CD4-positive, alpha-beta memory T cell (primary cell): ENCODE measurements at regions of chr12 and their contacts with region 1.

Region 1: DNA sequence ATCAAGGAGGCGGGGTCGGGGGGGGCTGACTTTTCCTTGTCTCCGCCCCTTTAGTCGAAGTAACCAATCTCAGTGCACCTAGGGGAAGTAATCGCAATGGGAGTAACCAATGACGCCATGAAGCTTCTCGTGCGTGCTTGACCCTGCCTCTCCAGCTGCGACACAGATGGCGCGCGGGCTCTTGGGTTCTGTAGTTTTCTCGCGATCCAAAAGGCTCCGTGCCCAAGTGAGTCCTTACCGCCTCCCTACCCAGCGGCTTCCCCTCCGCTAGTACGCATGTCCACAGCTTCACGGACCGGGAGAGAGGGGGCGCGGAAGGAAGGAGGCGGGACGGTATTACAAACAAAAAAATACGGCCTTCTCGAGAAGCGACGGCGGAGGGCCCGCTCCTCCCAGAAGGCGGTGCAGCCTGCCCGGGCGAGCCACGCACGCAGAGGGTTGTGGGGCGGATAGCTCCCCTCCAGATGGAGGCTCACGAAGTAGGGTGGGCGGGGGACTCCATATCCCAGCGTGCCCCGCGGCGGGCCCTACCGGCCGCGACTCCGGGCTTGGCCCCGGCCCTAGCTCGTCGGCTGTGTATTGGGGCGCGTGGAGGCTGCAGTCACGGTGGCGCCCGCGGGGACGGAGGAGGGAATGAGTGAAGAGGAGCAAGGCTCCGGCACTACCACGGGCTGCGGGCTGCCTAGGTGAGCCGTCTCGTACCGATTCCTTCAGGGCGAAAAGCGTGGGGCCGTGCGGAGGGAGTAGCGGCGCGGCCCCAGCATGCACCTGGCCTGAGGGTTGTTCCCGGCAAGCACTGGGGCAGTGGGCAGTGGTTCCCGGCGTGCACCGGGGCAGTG is at the start of gene TARBP2:
- DNase-seq: peak; percentile 98 to 99 (median 99)
- H3K4me3 ChIP-seq: peak within 1 kb of the TSS; percentile 79 to 91
- H3K4me3 Mint-ChIP-seq: peak within 1 kb of the TSS; percentile 89 to 98 (median 92)
- H3K27ac ChIP-seq: peak within 1 kb of the TSS; percentile 98
- H3K27ac Mint-ChIP-seq: peak within 1 kb of the TSS; percentile 92 to 100 (median 99)
- H3K4me1 ChIP-seq: peaks cover 41% of the 10 kb centered on the region
- H3K4me1 Mint-ChIP-seq: peaks cover 17 to 63% (median 45%) of the 10 kb centered on the region in 4 donors
- H3K27me3 ChIP-seq: no peaks in the 10 kb centered on the region
- H3K27me3 Mint-ChIP-seq: no peaks in the 10 kb centered on the region
- total RNA-seq, gene TARBP2: 26.9 to 37.0 TPM

Region 2: DNA sequence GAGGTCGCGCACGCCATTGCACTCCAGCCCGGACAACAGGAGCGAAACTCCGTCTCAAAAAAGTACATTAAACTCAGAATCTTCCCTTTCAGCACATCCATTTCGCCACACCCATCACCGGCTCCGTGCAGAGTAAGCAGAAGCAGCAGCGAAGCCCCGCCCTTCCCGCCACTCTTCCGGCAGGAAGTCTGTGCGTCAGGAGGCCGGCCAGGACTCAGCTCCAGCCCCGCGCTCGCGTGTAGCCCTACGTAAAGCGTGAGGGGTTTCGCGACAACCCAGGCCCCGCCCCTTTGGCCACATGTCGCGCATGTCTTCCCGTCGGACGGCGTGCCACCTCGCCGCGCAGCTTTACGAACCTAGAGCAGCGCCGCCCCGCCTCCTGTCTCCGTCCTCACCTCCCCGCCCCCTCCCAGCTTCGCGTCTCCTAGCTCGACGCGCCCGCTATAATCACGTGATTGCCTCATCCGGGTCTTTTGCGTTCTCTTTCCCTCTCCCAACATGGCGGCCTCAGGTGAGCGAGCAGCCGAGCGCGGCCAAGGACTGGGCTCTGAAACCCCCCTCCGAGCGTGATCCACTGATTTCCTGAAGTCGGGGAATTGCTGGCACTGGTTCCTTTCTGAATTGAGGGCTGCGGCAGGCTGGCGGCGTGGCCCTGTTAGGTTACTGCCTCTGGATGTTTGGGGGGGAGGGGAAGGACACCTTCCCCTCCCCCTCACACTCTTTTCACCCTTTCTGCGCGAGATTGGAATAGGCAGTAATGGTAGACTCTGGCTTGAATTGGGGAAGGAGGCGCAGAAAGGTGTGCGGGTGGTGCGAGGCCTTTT is 494.8 kb before region 1 on chr12 and contains the start of gene EIF4B:
- CTCF ChIA-PET with region 1: no interaction called
- POLR2A ChIA-PET with region 1: interaction called, 4 read pairs
- intact Hi-C with region 1: loop called (anchors 1 kb)
- DNase-seq: peak; percentile 97 to 100 (median 100)
- H3K4me3 ChIP-seq: peak within 1 kb of the TSS; percentile 99 to 100
- H3K4me3 Mint-ChIP-seq: peak within 1 kb of the TSS; percentile 99 to 100 (median 99)
- H3K27ac ChIP-seq: peak within 1 kb of the TSS; percentile 94
- H3K27ac Mint-ChIP-seq: peak within 1 kb of the TSS; percentile 99 to 100 (median 99)
- H3K4me1 ChIP-seq: peaks cover 51% of the 10 kb centered on the region
- H3K4me1 Mint-ChIP-seq: peaks cover 26 to 58% (median 43%) of the 10 kb centered on the region in 4 donors
- H3K27me3 ChIP-seq: no peaks in the 10 kb centered on the region
- H3K27me3 Mint-ChIP-seq: no peaks in the 10 kb centered on the region
- total RNA-seq, gene EIF4B: 730 to 777 TPM

Region 3: GRCh38 chr12:53220801-53221202 is 280.2 kb before region 1 on chr12:
- CTCF ChIA-PET with region 1: no interaction called
- POLR2A ChIA-PET with region 1: interaction called, 19 read pairs
- intact Hi-C with region 1: no loop called
- DNase-seq: peak; percentile 60 to 85 (median 65)
- H3K4me3 ChIP-seq: peak overlapping the region; percentile 73 to 82
- H3K4me3 Mint-ChIP-seq: peak overlapping the region; percentile 95 to 99 (median 98)
- H3K27ac ChIP-seq: peak overlapping the region; percentile 98
- H3K27ac Mint-ChIP-seq: peak overlapping the region; percentile 93 to 99 (median 97)
- H3K4me1 ChIP-seq: peaks cover 78% of the 10 kb centered on the region
- H3K4me1 Mint-ChIP-seq: peaks cover 63 to 93% (median 72%) of the 10 kb centered on the region in 4 donors
- H3K27me3 ChIP-seq: no peaks in the 10 kb centered on the region
- H3K27me3 Mint-ChIP-seq: no peaks in the 10 kb centered on the region

Region 4: DNA sequence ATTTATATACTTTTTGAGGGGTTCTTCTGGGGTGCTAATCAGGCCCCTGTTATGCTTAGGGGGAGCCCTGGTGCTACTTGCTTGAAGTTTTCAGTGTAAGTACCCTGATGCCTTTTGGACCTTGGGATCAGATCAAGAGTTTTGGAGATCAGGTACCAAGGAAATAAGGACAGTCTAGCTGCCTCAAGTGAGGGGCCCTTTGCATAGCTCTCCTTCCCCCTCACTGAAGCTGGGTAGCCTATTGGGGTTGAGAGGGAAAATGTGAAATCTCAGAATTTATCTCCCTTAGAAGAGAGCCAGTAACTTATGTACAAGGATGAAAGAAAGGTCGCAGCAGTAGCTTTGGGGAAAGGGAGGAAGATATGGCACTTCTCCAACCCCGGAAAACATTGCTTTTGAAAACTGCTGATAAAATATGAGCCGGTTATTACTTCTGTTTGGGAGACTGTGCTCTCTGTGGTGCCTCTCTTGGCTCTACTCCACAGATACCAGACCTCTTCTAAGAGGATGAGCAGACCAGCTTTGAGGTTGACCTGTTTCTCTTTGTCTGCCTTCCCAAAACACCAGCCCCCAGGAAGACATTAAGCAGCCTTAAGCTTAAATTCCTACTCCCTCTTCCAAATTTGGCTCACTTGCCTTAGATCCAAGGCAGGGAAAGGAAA is 86.1 kb before region 1 on chr12:
- CTCF ChIA-PET with region 1: no interaction called
- POLR2A ChIA-PET with region 1: interaction called, 8 read pairs
- intact Hi-C with region 1: loop called (anchors 2 kb)
- DNase-seq: no peak
- H3K4me3 ChIP-seq: no peak overlapping the region
- H3K4me3 Mint-ChIP-seq: no peak overlapping the region
- H3K27ac ChIP-seq: no peak overlapping the region
- H3K27ac Mint-ChIP-seq: peak overlapping the region; percentile 13 to 86 (median 48)
- H3K4me1 ChIP-seq: peaks cover 29% of the 10 kb centered on the region
- H3K4me1 Mint-ChIP-seq: peaks cover 26 to 43% (median 32%) of the 10 kb centered on the region in 4 donors
- H3K27me3 ChIP-seq: no peaks in the 10 kb centered on the region
- H3K27me3 Mint-ChIP-seq: no peaks in the 10 kb centered on the region

Region 5: DNA sequence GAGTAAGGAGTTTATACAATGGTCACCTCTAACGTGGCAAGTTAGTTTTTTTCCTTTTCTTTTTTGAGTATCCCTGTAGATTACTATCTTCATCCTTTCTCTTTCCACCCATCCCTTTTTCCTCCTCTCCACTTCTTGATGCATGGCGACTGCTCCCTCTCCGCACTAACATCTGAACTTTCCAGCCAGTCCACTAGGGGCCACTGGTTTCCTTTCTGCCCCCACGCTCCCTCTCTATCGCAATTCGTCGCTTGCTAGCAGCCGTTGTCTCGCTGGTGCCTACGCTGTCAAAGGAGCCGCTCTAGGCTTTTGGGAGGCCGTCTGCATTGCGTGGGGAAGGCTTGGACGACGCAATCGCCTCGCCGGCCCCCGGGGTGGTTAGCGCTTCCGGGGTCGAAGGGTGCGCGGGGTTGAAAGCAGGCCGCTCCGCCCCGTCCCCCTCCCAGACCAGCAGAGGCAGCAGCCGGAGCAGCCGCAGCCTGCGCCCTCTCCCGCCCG is 49.3 kb before region 1 on chr12 and contains the start of gene PCBP2:
- CTCF ChIA-PET with region 1: interaction called, 3 read pairs
- POLR2A ChIA-PET with region 1: interaction called, 43 read pairs
- intact Hi-C with region 1: loop called (anchors 1 kb)
- DNase-seq: peak; percentile 97 to 99 (median 98)
- H3K4me3 ChIP-seq: peak within 1 kb of the TSS; percentile 58 to 61
- H3K4me3 Mint-ChIP-seq: peak within 1 kb of the TSS; percentile 95 to 100 (median 98)
- H3K27ac ChIP-seq: peak within 1 kb of the TSS; percentile 95
- H3K27ac Mint-ChIP-seq: peak within 1 kb of the TSS; percentile 98 to 100 (median 99)
- H3K4me1 ChIP-seq: peaks cover 34% of the 10 kb centered on the region
- H3K4me1 Mint-ChIP-seq: peaks cover 20 to 49% (median 31%) of the 10 kb centered on the region in 4 donors
- H3K27me3 ChIP-seq: no peaks in the 10 kb centered on the region
- H3K27me3 Mint-ChIP-seq: no peaks in the 10 kb centered on the region
- total RNA-seq, gene PCBP2: 848 to 858 TPM

Region 6: DNA sequence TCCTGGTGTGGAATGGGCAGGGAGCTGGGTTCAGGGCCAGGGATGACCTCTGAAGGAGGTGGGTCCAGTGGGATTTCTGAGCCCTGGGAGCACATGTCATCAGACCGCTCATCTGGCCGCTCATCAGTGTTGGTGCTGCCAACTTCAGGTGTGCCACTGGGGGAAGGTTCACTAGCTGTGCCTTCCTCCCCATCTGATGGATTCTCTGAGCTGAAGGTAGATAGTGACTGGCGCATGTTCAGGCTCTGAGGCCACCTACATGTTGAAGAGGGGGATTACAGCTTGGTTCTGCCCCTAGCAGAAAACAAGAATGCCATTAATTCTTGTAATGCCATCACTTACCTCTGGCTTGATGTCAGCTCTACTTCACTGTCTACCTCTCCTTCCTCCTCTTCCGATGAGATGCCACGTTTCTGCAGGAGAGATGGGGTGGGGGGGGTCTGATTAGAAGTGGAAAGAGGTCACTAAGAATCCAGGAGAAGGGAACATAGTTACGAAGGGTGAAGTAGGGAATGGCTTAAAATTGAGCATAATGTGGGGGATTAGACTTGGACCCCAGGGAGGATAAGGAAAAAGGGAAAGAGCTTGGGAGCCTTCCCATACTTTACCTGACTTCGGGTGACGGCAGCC is 18.9 kb before region 1 on chr12:
- CTCF ChIA-PET with region 1: interaction called, 6 read pairs
- POLR2A ChIA-PET with region 1: interaction called, 67 read pairs
- intact Hi-C with region 1: no loop called
- DNase-seq: peak in 1 of 5 donors; percentile 23
- H3K4me3 ChIP-seq: no peak overlapping the region
- H3K4me3 Mint-ChIP-seq: no peak overlapping the region
- H3K27ac ChIP-seq: no peak overlapping the region
- H3K27ac Mint-ChIP-seq: peak overlapping the region in 5 of 7 donors; percentile 13 to 73 (median 48)
- H3K4me1 ChIP-seq: peaks cover 6% of the 10 kb centered on the region
- H3K4me1 Mint-ChIP-seq: peaks cover 2 to 12% (median 6%) of the 10 kb centered on the region in 4 donors
- H3K27me3 ChIP-seq: no peaks in the 10 kb centered on the region
- H3K27me3 Mint-ChIP-seq: no peaks in the 10 kb centered on the region

Region 7: GRCh38 chr12:53518381-53518780 is 17.4 kb after region 1 on chr12:
- CTCF ChIA-PET with region 1: no interaction called
- POLR2A ChIA-PET with region 1: no interaction called
- intact Hi-C with region 1: no loop called
- DNase-seq: no peak
- H3K4me3 ChIP-seq: no peak overlapping the region
- H3K4me3 Mint-ChIP-seq: no peak overlapping the region
- H3K27ac ChIP-seq: no peak overlapping the region
- H3K27ac Mint-ChIP-seq: no peak overlapping the region
- H3K4me1 ChIP-seq: no peaks in the 10 kb centered on the region
- H3K4me1 Mint-ChIP-seq: no peaks in the 10 kb centered on the region
- H3K27me3 ChIP-seq: no peaks in the 10 kb centered on the region
- H3K27me3 Mint-ChIP-seq: no peaks in the 10 kb centered on the region

Region 8: DNA sequence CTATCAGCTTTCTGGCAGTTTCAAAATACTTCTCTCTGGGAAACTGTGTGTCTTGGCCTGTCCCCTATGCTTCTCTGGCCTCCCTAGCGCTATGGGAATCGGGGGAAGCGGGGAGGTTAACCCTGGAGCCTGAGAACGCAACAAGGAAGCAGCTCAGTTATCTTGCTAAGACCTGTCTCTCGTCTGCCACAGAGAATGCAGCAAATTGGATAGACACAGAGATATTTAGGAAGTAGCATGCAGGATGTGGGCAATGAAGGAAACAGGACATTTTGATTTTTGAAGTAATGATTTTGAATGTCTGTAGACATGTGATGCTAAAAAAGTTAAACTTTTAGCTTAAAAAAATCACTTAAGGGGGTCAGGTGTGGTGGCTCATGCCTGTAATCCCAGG is 232.8 kb after region 1 on chr12:
- CTCF ChIA-PET with region 1: no interaction called
- POLR2A ChIA-PET with region 1: no interaction called
- intact Hi-C with region 1: no loop called
- DNase-seq: no peak
- H3K4me3 ChIP-seq: no peak overlapping the region
- H3K4me3 Mint-ChIP-seq: peak overlapping the region in 1 of 8 donors; percentile 25
- H3K27ac ChIP-seq: no peak overlapping the region
- H3K27ac Mint-ChIP-seq: peak overlapping the region in 2 of 7 donors; percentile 25 to 38
- H3K4me1 ChIP-seq: peaks cover 6% of the 10 kb centered on the region
- H3K4me1 Mint-ChIP-seq: peaks cover 5 to 27% (median 12%) of the 10 kb centered on the region in 4 donors
- H3K27me3 ChIP-seq: peaks cover 16% of the 10 kb centered on the region
- H3K27me3 Mint-ChIP-seq: peaks cover 7 to 15% of the 10 kb centered on the region in 2 donors